OCI-LY7 (cell line): ENCODE measurements at regions of chr19 and their contacts with region 1.

Region 1: GRCh38 chr19:49866933-49867782 is at the start of gene PNKP:
- DNase-seq: peak; percentile 90
- H3K4me3 ChIP-seq: peak within 1 kb of the TSS; percentile 80
- H3K27ac ChIP-seq: peak within 1 kb of the TSS; percentile 69
- H3K4me1 ChIP-seq: peaks cover 52% of the 10 kb centered on the region
- CTCF ChIP-seq: no peak
- total RNA-seq, gene PNKP: 65.4 and 90.9 TPM in 2 replicates

Region 2: GRCh38 chr19:49766007-49766937 is 100.9 kb before region 1 on chr19:
- CTCF ChIA-PET with region 1: no interaction called
- POLR2A ChIA-PET with region 1: no interaction called
- intact Hi-C with region 1: loop called (anchors 1 kb)
- DNase-seq: peak; percentile 100
- H3K4me3 ChIP-seq: peak overlapping the region; percentile 98
- H3K27ac ChIP-seq: peak overlapping the region; percentile 74
- H3K4me1 ChIP-seq: peaks cover 17% of the 10 kb centered on the region
- CTCF ChIP-seq: no peak

Region 3: DNA sequence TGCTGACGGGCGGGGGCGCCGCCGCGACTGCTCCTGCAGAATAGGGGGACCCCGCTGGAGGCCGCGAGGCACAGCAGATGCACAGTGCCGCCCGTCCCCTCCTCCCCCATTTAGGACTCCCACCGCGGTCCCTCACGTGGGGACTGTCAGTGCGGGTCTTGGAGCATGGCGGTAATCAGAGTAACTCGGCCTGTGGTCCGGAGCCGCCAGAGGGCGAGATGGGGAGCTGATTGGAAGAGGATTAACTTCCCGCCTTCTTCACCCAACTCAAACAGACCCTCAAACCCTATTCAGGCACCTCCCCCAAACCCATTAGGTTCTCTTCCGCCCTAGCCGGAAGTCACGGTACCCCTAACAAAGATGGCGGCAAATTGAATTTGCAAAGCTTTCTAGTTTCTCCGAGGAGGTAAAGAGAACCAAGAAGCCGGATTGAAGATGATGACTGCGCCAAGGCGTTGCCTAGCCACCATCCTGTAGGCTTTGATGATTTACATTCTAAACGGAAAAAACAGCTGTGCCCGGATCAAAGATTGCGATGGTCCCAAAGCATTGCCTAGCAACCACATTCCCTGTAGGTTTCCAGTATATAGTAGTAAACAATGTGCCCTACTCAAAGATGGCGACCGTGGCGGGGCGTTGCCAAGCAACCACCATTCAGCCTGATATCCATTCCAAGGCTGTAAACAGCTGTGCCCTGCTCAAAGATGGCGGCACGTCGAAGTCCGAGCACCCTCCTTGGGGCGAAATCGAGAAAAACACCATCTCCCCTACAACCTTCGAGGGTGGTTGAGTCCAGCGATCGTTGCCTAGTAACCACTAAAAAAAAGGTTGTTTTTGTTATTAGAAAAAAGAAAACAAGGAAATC is 53.9 kb before region 1 on chr19 and contains the start of gene FUZ:
- CTCF ChIA-PET with region 1: interaction called, 5 read pairs
- POLR2A ChIA-PET with region 1: no interaction called
- intact Hi-C with region 1: loop called (anchors 2 kb)
- DNase-seq: peak; percentile 99
- H3K4me3 ChIP-seq: peak within 1 kb of the TSS; percentile 69
- H3K27ac ChIP-seq: peak within 1 kb of the TSS; percentile 61
- H3K4me1 ChIP-seq: peaks cover 49% of the 10 kb centered on the region
- CTCF ChIP-seq: peak; percentile 71
- total RNA-seq, gene FUZ: 33.6 and 35.1 TPM in 2 replicates

Region 4: GRCh38 chr19:49937750-49938381 is 70.7 kb after region 1 on chr19:
- CTCF ChIA-PET with region 1: no interaction called
- POLR2A ChIA-PET with region 1: no interaction called
- intact Hi-C with region 1: no loop called
- DNase-seq: peak; percentile 73
- H3K4me3 ChIP-seq: no peak overlapping the region
- H3K27ac ChIP-seq: no peak overlapping the region
- H3K4me1 ChIP-seq: no peaks in the 10 kb centered on the region
- CTCF ChIP-seq: peak; percentile 97

Region 5: DNA sequence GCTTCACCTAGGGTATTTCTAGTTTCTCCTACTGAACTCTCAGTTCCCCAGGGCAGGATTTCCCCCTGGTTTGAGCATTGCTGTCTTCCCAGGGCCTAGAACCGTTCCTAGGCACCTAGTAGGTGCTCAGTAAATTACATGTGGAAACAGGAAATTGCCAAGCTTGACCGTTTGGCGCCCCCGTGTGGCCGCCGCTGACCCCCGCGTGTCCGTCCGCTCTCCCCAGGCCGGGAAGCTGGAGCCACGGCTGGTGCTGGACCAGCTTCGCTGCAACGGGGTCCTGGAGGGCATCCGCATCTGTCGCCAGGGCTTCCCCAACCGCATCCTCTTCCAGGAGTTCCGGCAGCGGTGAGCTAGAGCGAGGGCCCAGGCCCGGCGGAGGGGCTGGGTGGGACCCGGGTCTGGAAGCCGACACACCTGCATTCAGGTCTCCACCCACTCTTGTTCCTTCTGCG is 391.8 kb after region 1 on chr19:
- CTCF ChIA-PET with region 1: no interaction called
- POLR2A ChIA-PET with region 1: no interaction called
- intact Hi-C with region 1: no loop called
- DNase-seq: peak; percentile 6
- H3K4me3 ChIP-seq: no peak overlapping the region
- H3K27ac ChIP-seq: no peak overlapping the region
- H3K4me1 ChIP-seq: no peaks in the 10 kb centered on the region
- CTCF ChIP-seq: peak; percentile 78